ENCODE measurements at regions of chr3 and their contacts with region 1.

Region 1: GRCh38 chr3:5187156-5187919 is at the start of gene EDEM1:
- DNase-seq: peak; percentile 96
- ATAC-seq: peak; percentile 95
- H3K4me3 Mint-ChIP-seq: peak within 1 kb of the TSS; percentile 93
- H3K27ac Mint-ChIP-seq: peak within 1 kb of the TSS; percentile 96
- H3K4me1 Mint-ChIP-seq: peaks cover 22% of the 10 kb centered on the region
- H3K27me3 Mint-ChIP-seq: no peaks in the 10 kb centered on the region
- total RNA-seq, gene EDEM1: 79.0 to 119 TPM

Region 2: GRCh38 chr3:5165698-5166097 is 21.6 kb before region 1 on chr3:
- CTCF ChIA-PET with region 1: no interaction called
- DNase-seq: no peak
- ATAC-seq: no peak
- H3K4me3 Mint-ChIP-seq: no peak overlapping the region
- H3K27ac Mint-ChIP-seq: no peak overlapping the region
- H3K4me1 Mint-ChIP-seq: peaks cover 34% of the 10 kb centered on the region
- H3K27me3 Mint-ChIP-seq: no peaks in the 10 kb centered on the region

Region 3: DNA sequence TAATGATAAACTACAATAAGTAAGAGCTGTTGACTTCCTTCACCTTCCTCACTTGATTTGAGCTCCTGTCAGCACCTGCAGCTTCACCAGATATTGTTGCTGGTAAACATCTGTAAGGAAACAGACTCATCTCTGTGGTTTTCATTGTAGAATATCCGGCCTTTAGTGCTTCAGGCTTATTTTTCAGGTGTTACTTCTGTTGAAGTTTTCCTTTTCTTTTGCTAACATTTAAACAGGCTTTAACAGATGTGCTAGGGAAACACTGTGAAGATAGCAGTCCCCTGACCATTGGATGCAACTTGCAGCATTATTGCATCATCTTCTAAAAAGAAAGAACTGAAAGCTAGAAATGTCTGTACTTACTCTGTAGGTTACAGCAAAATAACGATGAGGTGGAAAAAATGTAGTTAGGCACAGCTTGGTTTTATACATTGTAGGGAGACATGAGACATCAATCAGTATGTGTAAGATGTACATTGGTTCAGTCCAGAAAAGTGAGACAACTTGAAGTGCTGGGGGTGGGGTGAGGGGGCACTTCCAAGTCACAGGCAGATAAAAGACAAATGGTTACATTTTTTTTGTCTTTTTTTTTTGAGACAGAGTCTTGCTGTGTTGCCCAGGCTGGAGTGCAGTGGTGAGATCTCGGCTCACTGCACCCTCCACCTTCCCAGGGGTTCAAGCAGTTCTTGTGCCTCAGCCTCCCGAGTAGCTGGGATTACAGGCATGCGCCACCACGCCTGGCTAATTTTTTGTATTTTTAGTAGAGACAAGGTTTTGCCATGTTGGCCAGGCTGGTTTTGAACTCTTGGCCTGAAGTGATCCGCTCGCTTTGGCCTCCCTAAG is 10.4 kb after region 1 on chr3:
- CTCF ChIA-PET with region 1: interaction called, 25 read pairs
- DNase-seq: peak; percentile 68
- ATAC-seq: peak; percentile 52
- H3K4me3 Mint-ChIP-seq: peak overlapping the region; percentile 63
- H3K27ac Mint-ChIP-seq: peak overlapping the region; percentile 89
- H3K4me1 Mint-ChIP-seq: peaks cover 73% of the 10 kb centered on the region
- H3K27me3 Mint-ChIP-seq: no peaks in the 10 kb centered on the region

Measured in activated CD8-positive, alpha-beta memory T cell treated with anti-CD3 and anti-CD28 coated beads, Interleukin-2, amount 10 ng/mL, durations not matched to agents 7 days and 5 days (primary cell).